Breast epithelium (tissue), 4 donors: ENCODE measurements at regions of chr14 and their contacts with region 1.

Region 1: DNA sequence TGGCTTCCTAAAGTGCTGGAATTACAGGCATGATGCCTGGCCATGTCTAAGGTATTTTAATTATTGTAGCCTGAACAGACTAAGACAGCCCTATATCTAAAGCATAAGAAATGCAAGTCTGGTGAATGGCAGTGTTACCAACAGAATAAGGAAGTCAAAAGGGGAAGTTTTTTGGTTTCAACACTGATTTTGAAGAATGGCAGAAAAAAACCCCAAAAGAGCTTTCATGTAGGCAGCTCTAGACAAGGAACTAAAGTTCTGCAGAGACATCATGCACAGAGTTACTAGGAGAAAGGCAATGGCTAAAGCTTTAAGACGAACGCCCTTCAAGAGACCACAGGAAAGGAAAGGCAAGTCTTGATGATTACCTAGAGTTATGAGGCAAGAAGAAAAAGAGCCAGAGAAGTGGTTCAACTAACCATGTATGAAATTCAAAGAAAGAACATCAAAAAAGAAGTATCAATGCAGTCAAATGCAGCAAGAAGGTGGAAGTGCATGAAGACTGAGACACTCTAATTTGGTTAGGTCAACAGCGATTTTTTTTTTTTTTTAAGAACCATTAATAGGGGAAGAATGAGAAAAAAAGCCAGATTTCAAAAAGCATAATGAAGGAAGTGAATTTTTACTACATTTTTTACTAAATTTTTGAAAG is 50.8 kb downstream of the RPS6KA5 start:
- DNase-seq: no peak
- H3K4me3 ChIP-seq: no peak overlapping the region
- H3K27ac ChIP-seq: no peak overlapping the region
- H3K4me1 ChIP-seq: no peaks in the 10 kb centered on the region
- H3K27me3 ChIP-seq: no peaks in the 10 kb centered on the region
- CTCF ChIP-seq: no peak
- POLR2A ChIP-seq: no peak

Region 2: DNA sequence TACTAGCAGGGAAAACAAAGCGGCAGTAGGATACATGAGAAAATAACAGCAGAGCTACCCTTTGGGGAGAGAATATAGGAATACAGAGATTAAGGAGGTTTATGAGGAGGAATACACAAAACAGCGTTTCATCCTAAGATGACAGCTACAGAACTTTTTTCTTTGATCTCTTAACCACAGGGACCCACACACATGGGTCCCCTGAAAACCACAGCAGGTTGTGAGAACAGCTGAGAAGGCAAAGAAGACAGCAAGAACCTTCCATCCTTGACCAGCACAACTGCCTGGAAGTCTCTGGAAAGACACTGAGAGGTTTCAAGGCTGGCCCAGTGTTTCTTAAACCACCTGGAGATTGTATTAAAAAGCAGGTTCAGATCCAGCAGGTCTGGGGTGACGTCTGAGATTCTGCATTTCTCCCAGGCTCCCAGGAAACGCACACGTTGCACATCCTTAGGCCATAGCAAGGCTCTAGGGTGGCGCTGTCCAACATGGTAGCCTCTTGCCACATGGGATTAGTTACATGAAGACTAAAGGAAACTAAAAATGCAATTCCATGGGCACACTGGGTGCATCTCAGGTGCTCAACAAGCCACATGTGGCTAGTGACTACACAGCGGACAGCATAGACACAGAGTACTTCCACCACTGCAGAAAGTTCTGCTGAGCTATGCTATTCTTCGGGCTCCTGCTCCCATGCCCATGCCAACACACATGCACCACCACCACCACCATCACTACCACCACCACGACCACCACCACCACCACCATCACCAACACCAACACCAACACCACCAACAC is 1684.9 kb before region 1 on chr14:
- intact Hi-C with region 1: loop called (anchors 10 kb)
- DNase-seq: no peak
- H3K4me3 ChIP-seq: no peak overlapping the region
- H3K27ac ChIP-seq: no peak overlapping the region
- H3K4me1 ChIP-seq: no peaks in the 10 kb centered on the region
- H3K27me3 ChIP-seq: no peaks in the 10 kb centered on the region
- CTCF ChIP-seq: no peak
- POLR2A ChIP-seq: no peak

Region 3: GRCh38 chr14:89915114-89915878 is 1094.3 kb before region 1 on chr14:
- intact Hi-C with region 1: no loop called
- DNase-seq: peak in 1 of 2 donors; percentile 72
- H3K4me3 ChIP-seq: no peak overlapping the region
- H3K27ac ChIP-seq: no peak overlapping the region
- H3K4me1 ChIP-seq: no peaks in the 10 kb centered on the region
- H3K27me3 ChIP-seq: no peaks in the 10 kb centered on the region
- CTCF ChIP-seq: peak; percentile 75 to 89 (median 84)
- POLR2A ChIP-seq: no peak

Region 4: DNA sequence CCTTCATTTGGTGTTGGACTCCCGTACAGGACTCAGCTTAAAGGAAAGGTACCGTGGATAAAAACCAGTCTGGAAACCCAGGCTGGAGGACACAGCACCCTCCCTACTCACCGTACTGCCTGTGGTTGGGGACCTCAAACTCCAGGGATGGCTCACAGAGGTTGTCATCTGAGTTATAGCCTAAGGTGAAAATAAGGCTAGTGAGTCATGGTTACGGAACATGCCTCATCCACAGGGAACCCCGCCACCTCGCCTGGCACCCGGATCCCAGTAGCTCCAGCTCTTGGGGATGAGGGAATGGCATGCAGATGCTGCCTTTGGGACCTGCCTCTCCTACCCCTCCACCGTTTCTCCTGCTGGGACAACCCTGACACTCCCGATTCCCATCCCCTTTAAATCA is 271.7 kb after region 1 on chr14:
- intact Hi-C with region 1: no loop called
- DNase-seq: no peak
- H3K4me3 ChIP-seq: no peak overlapping the region
- H3K27ac ChIP-seq: no peak overlapping the region
- H3K4me1 ChIP-seq: no peaks in the 10 kb centered on the region
- H3K27me3 ChIP-seq: no peaks in the 10 kb centered on the region
- CTCF ChIP-seq: no peak
- POLR2A ChIP-seq: no peak